ENCODE measurements at regions of chr20 and their contacts with region 1.

Region 1: GRCh38 chr20:39049684-39050554 is 87.8 kb downstream of the DHX35 start:
- DNase-seq: peak; percentile 78
- H3K4me3 Mint-ChIP-seq: peak overlapping the region; percentile 76
- H3K27ac Mint-ChIP-seq: peak overlapping the region; percentile 18
- H3K4me1 Mint-ChIP-seq: peaks cover 6% of the 10 kb centered on the region
- H3K27me3 Mint-ChIP-seq: no peaks in the 10 kb centered on the region

Region 2: GRCh38 chr20:38633577-38634093 is 416.3 kb before region 1 on chr20:
- CTCF ChIA-PET with region 1: no interaction called
- intact Hi-C with region 1: loop called (anchors 5 kb)
- DNase-seq: peak; percentile 73
- H3K4me3 Mint-ChIP-seq: no peak overlapping the region
- H3K27ac Mint-ChIP-seq: no peak overlapping the region
- H3K4me1 Mint-ChIP-seq: peaks cover 2% of the 10 kb centered on the region
- H3K27me3 Mint-ChIP-seq: peaks cover 15% of the 10 kb centered on the region

Region 3: GRCh38 chr20:38748097-38748860 is 301.6 kb before region 1 on chr20 and contains the start of gene ACTR5:
- CTCF ChIA-PET with region 1: interaction called, 5 read pairs
- intact Hi-C with region 1: loop called (anchors 5 kb)
- DNase-seq: peak; percentile 97
- H3K4me3 Mint-ChIP-seq: peak within 1 kb of the TSS; percentile 97
- H3K27ac Mint-ChIP-seq: peak within 1 kb of the TSS; percentile 93
- H3K4me1 Mint-ChIP-seq: peaks cover 15% of the 10 kb centered on the region
- H3K27me3 Mint-ChIP-seq: no peaks in the 10 kb centered on the region
- total RNA-seq, gene ACTR5: 8.3 to 9.4 TPM

Region 4: DNA sequence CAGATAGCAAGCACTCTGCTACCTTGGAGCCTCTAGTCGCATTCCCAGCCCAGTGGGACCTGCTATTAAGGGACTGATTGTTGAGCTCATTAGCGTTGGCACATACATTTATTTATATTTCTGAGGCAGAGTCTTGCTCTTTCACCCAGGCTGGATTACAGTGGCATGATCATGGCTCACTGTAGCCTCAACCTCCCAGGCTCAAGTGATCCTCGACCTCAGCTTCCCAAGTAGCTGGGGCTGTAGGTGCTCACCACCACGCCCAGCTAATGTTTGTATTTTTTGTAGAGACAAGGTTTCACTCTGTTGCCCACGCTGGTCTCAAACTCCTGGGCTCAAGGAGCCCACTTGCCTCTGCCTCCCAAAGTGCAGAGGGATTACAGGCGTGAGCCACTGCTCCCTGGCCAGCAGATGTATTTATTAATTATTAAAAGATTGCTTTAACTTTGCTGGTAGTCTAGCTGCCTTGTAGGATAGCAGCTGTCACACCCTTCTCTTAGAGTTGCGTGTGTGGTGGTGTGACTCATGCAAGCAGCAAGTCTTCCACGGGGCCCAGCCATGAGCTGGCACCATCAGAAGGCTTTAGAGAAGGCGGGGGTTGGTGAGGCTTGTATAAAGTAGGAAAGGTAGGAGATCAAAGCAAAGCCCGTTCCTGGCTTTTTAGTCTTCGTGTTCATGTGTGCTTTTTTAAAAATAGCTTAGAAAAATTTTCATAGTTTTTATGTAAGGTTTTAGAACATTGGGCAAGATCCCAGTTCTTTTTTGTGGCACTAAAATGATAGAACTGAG is 285.2 kb before region 1 on chr20:
- CTCF ChIA-PET with region 1: no interaction called
- intact Hi-C with region 1: no loop called
- DNase-seq: peak; percentile 80
- H3K4me3 Mint-ChIP-seq: no peak overlapping the region
- H3K27ac Mint-ChIP-seq: peak overlapping the region; percentile 33
- H3K4me1 Mint-ChIP-seq: peaks cover 21% of the 10 kb centered on the region
- H3K27me3 Mint-ChIP-seq: no peaks in the 10 kb centered on the region

Region 5: DNA sequence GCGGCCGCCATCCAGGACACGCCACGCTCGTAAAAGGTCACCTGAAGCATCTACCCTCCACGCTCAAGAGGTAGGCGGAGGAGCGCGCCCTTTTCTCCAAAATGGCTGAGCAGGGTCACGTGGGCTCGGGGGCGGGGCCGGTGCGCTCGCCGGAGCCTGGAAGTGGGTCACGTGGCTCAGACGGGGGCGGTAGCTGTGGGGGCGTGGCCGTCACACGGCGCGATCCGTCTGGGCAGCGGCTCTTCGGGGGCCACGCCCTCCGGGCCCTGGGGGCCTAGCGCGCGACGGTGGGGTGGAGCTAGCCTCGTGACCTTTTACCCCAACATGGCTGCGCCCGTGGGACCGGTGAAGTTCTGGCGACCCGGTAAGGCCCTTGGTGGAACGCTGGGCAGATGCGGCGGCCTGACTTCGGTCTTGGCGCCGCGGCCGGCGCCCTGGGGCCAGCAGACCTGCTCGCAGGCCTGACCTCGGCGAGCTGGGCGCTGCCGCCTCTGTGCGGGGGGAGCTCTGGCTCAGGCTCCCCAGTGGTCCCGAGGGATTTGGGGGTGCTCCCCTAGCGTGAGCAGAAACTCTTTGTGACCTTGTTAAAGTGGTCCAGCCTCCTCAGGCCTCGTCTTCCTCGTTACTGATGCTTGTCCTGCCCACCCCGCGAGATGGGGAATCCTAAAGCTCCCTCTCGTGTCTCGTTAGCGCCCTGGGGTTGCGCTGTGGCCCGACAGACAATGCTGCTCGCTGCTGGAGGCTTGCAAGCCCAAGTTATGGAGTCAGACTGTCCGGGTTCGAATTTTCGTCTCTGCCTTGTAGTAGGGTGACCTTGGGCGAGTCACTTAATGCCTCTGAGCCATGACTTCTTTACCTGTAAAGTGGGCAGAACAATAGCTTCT is 87.6 kb before region 1 on chr20 and contains the start of gene DHX35:
- CTCF ChIA-PET with region 1: interaction called, 33 read pairs
- intact Hi-C with region 1: loop called (anchors 1 kb)
- DNase-seq: peak; percentile 99
- H3K4me3 Mint-ChIP-seq: peak within 1 kb of the TSS; percentile 95
- H3K27ac Mint-ChIP-seq: peak within 1 kb of the TSS; percentile 98
- H3K4me1 Mint-ChIP-seq: peaks cover 32% of the 10 kb centered on the region
- H3K27me3 Mint-ChIP-seq: no peaks in the 10 kb centered on the region
- total RNA-seq, gene DHX35: 9.5 to 10.3 TPM

Region 6: GRCh38 chr20:39070484-39071231 is 20.7 kb after region 1 on chr20:
- CTCF ChIA-PET with region 1: interaction called, 36 read pairs
- intact Hi-C with region 1: no loop called
- DNase-seq: no peak
- H3K4me3 Mint-ChIP-seq: no peak overlapping the region
- H3K27ac Mint-ChIP-seq: no peak overlapping the region
- H3K4me1 Mint-ChIP-seq: no peaks in the 10 kb centered on the region
- H3K27me3 Mint-ChIP-seq: peaks cover 8% of the 10 kb centered on the region

Region 7: DNA sequence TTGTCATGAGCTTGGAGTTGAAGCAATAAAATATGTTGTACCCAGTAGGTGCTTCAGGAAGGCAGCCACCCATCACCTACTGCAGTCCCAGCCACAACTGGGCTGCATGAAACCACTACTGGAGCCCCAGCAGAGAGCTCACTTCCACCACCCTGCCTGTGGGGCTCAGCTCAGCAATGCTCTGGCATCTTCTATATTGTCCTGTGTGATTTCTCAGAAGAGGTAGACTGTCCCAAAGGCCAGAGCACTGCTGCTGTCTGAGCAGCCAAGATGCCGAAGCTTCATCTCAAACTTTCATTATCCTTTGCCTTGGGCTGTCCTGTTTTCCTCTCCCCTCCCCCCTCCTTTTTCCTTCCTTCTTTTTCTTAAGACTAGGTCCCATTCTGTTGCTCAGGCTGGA is 39.1 kb after region 1 on chr20:
- CTCF ChIA-PET with region 1: interaction called, 18 read pairs
- intact Hi-C with region 1: no loop called
- DNase-seq: no peak
- H3K4me3 Mint-ChIP-seq: no peak overlapping the region
- H3K27ac Mint-ChIP-seq: no peak overlapping the region
- H3K4me1 Mint-ChIP-seq: no peaks in the 10 kb centered on the region
- H3K27me3 Mint-ChIP-seq: peaks cover 5% of the 10 kb centered on the region

Region 8: DNA sequence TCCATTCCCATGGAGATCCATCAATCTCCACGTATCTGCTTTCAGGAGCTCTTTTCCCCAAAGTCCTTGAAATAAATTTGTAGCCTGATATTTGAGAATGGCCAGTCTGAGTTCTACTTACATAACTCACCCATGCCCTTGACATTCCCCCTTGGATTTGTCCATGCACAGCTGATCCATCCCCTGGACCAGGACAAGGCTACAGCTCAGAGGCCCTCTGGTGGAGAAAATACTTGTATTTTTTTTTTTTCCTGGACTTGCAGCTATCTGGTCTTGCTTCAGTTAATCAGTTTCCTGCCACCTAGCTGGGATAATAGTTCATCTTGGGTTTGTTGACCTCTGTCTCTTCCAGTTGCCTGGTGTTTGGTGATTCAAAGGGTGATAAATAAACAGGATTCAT is 379.8 kb after region 1 on chr20:
- CTCF ChIA-PET with region 1: no interaction called
- intact Hi-C with region 1: no loop called
- DNase-seq: no peak
- H3K4me3 Mint-ChIP-seq: no peak overlapping the region
- H3K27ac Mint-ChIP-seq: no peak overlapping the region
- H3K4me1 Mint-ChIP-seq: no peaks in the 10 kb centered on the region
- H3K27me3 Mint-ChIP-seq: no peaks in the 10 kb centered on the region

Region 9: GRCh38 chr20:39453890-39454289 is 404.0 kb after region 1 on chr20:
- CTCF ChIA-PET with region 1: no interaction called
- intact Hi-C with region 1: no loop called
- DNase-seq: no peak
- H3K4me3 Mint-ChIP-seq: no peak overlapping the region
- H3K27ac Mint-ChIP-seq: no peak overlapping the region
- H3K4me1 Mint-ChIP-seq: no peaks in the 10 kb centered on the region
- H3K27me3 Mint-ChIP-seq: peaks cover 2% of the 10 kb centered on the region

Measured in activated naive CD4-positive, alpha-beta T cell treated with anti-CD3 and anti-CD28 coated beads for 36 hours (primary cell).